ENCODE measurements at regions of chr3 and their contacts with region 1.

Region 1: DNA sequence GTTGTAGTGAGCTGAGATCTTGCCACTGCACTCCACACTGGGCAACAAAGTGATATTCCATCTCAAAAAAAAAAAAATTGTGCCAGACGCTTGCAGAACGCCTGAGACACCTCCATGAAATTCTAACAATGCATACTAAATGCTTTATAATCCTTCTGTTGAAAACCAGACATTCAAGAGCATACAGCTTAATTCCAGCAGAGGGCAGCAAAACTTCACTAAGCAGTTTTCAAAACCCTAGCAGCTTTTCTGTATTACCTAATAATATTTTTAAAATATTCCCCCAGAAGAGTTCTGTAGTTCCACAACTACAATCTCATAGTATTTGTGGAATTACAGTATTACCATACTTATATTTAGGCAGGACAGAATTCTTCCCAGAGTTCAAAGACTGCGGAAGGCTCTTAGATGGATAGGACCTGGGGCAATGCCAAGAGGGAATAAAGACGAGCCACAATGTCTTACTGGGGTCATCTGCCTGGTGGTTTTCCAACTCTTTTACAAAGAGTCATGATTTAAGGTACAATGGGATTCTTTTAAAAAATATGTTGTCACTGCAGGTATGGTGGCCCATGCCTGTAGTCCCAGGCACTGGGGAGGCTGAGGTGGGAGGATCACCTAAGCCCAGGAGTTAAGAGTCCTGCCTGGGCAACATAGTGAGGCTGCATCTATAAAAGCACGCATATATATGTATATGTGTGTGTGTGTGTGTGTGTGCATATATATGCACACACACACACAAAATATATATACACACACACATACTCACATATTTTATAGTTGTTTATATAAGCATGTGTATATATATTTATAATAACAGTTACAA is 19.6 kb upstream of the TASOR start:
- DNase-seq: peak; percentile 46
- H3K27ac ChIP-seq: no peak overlapping the region
- CTCF ChIP-seq: peak; percentile 81

Region 2: GRCh38 chr3:56801662-56802377 is 99.1 kb after region 1 on chr3 and contains the start of gene ARHGEF3:
- CTCF ChIA-PET with region 1: interaction called, 14 read pairs
- POLR2A ChIA-PET with region 1: no interaction called
- DNase-seq: peak; percentile 82
- H3K27ac ChIP-seq: peak within 1 kb of the TSS; percentile 26
- CTCF ChIP-seq: peak; percentile 71

Region 3: GRCh38 chr3:56988458-56989168 is 285.9 kb after region 1 on chr3:
- CTCF ChIA-PET with region 1: interaction called, 27 read pairs
- POLR2A ChIA-PET with region 1: no interaction called
- DNase-seq: peak; percentile 36
- H3K27ac ChIP-seq: no peak overlapping the region
- CTCF ChIP-seq: peak; percentile 78